SK-N-SH (cell line): ENCODE measurements at regions of chr9 and their contacts with region 1.

Region 1: GRCh38 chr9:135809166-135809565 is 98.2 kb downstream of the CAMSAP1 start:
- DNase-seq: no peak
- H3K4me3 ChIP-seq: no peak overlapping the region
- H3K27ac ChIP-seq: no peak overlapping the region
- H3K4me1 ChIP-seq: peaks cover 0 to 8% of the 10 kb centered on the region in 2 experiments; a peak in 1 of 4 replicates
- H3K27me3 ChIP-seq: no peaks in the 10 kb centered on the region
- CTCF ChIP-seq: no peak
- EP300 ChIP-seq: no peak
- RAD21 ChIP-seq: no peak

Region 2: GRCh38 chr9:135757356-135757755 is 51.8 kb before region 1 on chr9:
- CTCF ChIA-PET with region 1: no interaction called
- POLR2A ChIA-PET with region 1: no interaction called
- DNase-seq: no peak
- H3K4me3 ChIP-seq: no peak overlapping the region
- H3K27ac ChIP-seq: no peak overlapping the region
- H3K4me1 ChIP-seq: no peaks in the 10 kb centered on the region; a peak in 1 of 4 replicates
- H3K27me3 ChIP-seq: no peaks in the 10 kb centered on the region
- CTCF ChIP-seq: no peak
- EP300 ChIP-seq: no peak
- RAD21 ChIP-seq: no peak

Region 3: GRCh38 chr9:135797507-135798262 is 11.5 kb before region 1 on chr9:
- CTCF ChIA-PET with region 1: interaction called, 11 read pairs
- POLR2A ChIA-PET with region 1: no interaction called
- DNase-seq: peak; percentile 90
- H3K4me3 ChIP-seq: no peak overlapping the region
- H3K27ac ChIP-seq: no peak overlapping the region
- H3K4me1 ChIP-seq: peaks cover 0 to 6% of the 10 kb centered on the region in 2 experiments; a peak in 1 of 4 replicates
- H3K27me3 ChIP-seq: no peaks in the 10 kb centered on the region; the same call in 1 of the 2 replicates
- CTCF ChIP-seq: peak; percentile 70
- EP300 ChIP-seq: no peak
- RAD21 ChIP-seq: peak; percentile 59